Left cardiac atrium (tissue), 4 donors: ENCODE measurements at regions of chr7 and their contacts with region 1.

Region 1: DNA sequence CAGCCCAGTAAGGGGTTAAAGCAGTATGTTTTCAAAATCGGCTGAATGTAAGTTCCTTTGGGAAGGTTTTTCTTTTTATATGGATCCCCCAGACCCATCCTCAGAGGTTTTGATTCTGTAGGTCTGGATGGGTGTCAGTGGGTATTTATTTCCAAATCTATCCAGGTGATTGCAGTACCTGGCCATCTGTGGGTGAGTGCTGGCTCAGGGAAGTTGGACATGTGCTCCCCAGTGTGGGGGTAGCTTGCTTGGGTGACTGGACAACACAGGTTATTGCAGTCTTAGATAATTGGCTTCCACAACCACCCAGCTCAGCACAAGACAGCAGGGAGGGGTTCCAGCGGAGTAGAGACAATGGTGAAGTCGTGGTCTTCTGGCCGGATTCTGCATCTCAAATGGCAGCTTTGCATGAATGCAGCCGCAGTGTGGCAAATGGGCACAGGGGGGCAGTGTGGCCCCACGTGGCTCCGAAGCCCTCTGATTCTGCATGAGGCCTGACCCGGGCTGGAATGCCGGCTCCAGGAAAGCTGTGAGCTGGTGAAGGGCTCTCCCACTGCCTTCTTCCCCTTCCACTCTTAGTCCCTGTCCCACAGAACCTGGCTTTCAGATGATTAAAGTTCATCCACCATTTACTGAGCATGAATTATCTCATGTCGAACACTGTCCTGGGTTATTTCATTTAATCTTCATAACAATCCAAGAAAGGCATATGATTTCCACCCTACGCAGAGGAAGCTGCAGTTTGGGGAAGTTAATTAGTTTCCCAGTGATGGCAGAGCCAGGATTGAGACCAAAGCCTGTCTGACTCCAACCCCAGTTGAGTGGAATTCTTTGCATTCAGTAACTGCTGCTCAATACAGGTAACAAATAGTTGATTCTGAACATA is 64.5 kb upstream of the SYPL1 start:
- DNase-seq: peak; percentile 89
- ATAC-seq: peak; percentile 89 to 90

Region 2: DNA sequence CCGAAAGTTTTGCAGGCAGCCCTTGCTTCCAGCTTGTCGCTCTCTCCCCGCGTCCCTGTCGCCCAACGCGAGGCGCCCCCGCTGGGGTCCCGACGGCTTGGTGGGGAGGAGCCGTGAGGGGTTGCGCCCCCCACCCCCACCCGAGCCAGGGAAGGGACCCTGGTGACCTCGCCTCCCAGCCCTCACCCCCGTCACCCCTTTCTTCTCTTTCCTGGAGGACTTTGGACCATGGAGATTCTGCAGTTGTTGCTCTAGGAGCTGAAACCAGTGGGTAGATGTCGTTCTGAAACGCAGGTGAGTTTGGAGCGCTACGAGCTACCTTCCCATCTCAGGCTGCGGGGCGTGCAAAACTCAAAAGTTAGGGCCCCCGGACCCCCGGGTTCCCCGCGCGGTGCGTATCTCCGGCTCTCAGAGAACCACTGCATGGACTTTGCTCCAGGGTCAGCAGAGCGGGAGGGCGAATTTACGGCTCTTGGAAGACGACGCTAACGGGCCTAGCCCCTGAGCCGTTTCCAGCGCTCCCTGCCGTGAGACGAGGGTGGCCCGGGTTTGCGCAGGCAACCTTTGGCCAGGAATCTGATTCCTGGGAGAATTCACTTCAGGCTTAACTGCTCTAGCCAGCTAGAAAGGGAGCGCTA is 299.6 kb before region 1 on chr7:
- intact Hi-C with region 1: no loop called
- DNase-seq: peak; percentile 44
- ATAC-seq: peak; percentile 36 to 52

Region 3: DNA sequence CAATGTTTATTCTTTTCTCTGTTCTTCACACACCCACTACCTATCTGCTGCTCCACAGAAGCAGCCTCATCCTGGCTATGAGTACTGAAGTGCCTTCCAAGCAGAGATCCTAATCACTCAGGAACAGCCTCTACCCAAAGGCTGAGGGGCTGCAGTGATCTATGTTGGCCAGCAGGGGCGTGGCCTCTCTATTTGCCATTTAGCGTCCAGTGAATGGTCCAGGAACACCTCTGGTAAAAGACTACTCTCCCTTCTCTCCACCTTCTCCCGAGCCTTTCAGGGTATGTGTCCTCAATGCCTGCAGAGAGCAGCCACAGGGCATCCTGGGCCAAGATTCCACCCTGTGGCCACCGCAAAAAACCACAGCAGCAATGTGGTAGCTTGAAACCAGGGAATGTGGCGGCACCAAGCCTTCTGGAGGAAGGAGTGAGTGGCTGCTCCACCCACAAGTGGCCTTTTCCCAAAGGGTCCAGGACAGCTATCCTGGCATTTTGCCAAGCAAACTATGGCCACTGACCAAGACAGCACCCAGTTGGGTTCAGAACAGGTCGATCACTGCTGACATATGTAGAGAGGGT is 135.4 kb before region 1 on chr7:
- intact Hi-C with region 1: no loop called
- DNase-seq: no peak
- ATAC-seq: no peak

Region 4: DNA sequence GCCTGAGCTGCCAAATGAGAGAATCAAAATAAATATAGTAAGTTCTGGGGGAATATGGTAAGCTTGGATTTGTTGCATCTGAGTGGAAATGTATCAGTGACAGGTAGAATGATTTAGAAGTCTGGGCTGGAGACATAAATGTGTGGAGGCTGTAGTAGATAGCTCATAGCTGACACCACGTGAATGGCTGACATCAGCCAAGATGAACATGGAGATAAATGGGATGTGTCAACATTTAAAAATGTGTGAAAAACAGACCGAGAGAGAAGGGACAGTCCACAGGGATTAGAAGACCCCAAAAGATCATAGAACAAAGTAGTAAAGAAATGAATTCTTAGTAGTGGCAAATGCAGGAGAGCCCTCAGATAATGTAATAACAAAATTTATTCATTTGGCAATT is 67.2 kb after region 1 on chr7:
- intact Hi-C with region 1: loop called in 1 of 2 experiments (anchors 5 kb)
- DNase-seq: no peak
- ATAC-seq: peak in 1 of 2 donors; percentile 28

Region 5: DNA sequence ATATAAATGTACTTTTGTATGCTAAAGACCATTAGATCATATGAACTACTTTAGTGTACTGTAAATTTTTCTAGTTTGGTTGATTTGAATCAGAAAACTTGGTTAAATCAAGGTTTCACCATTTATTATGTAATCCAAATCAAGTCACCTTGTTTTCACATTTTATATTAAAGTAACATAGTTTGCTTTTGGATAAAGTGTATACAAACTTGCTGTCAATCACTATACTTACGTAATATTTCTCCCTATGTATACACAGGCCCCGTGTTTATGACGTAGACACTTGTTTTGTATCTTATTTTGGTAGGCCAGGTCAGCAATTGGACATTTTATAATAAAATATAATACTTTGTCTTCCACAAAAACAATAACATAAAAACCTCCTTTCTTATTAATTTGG is 75.9 kb after region 1 on chr7:
- intact Hi-C with region 1: loop called in 1 of 2 experiments (anchors 2 kb)
- DNase-seq: no peak
- ATAC-seq: no peak

Region 6: DNA sequence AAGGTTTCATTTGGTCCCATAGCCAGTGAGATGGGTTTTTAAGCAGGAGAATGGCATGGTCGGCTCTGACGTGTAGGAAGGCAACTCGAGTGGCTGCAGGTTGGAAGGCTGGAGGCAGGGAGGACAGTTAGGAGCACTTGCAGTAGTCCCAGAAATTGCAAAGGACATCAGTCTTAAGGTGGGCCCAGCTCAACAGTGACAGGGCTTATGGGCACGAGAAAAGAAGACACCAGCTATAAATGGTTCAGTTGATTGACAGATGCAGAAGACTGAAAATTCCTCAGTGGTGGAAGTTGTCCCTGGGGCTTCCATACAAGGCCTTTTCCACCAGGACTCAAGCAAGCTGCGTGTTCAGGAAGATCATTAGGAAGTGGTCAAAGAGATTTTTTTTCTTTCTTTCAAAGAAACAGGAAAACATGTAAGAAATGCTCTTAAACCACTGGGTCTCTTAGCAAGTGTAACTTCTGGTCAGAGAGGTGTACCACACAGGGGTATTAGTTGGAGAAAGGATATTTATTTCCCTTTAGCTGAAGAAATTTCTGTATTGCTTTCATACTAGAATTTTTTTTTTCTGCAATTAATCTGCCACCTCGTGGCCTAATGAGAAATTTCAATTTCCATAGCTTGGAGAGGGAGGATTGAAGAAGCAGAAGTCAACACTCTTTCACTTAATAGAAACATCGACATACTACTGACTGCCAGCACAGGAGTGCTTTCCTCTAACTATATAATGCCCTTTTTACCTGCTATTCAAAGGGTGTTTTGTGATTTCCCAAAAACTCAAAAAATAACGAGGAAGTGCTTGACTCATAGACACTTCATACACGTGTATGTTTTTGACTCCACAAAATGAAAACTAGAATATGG is 285.6 kb after region 1 on chr7:
- intact Hi-C with region 1: loop called (anchors 1 to 2 kb)
- DNase-seq: no peak
- ATAC-seq: peak; percentile 35 to 57

Region 7: GRCh38 chr7:106659963-106660861 is 483.6 kb after region 1 on chr7:
- intact Hi-C with region 1: loop called in 1 of 2 experiments (anchors 5 kb)
- DNase-seq: peak; percentile 83
- ATAC-seq: peak; percentile 75

Region 8: DNA sequence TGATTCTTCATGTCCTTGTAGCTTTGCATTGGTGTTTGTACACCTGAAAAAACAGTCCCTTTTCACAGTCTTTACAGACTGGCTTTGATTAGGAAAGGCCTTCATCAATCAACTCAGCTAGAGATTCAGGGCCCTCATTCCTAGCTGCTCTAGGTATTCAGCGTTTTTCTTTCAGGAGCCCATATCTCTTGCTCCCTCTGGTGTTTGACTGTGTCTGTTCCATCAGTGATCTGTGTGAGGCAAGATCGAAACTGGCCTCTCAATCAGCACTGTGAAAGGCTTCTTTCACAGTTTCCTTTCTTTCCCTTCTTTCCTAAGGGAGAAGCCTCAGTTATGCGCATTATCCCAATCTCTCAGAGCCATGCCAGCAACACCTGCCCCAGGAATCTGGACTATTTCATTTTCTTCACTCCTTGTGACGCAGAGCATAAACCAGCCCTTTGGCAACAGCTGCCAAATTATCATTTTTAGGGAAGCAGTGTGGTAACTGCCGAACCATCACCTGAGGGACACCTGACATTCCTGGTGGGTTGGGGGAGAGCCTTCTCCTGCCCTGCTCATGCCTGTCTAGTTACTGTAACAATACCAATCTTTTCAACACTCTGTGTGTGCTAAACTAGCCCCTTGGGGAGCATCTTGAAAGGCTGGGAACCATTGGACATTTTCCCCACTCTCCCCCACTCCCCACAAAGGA is 560.0 kb after region 1 on chr7:
- intact Hi-C with region 1: loop called in 1 of 2 experiments (anchors 5 kb)
- DNase-seq: peak; percentile 21
- ATAC-seq: peak; percentile 86 to 91

Region 9: GRCh38 chr7:106938803-106939202 is 762.1 kb after region 1 on chr7:
- intact Hi-C with region 1: no loop called
- DNase-seq: no peak
- ATAC-seq: no peak